Right lobe of liver (tissue), 6 donors: ENCODE measurements at regions of chr1 and their contacts with region 1.

Region 1: DNA sequence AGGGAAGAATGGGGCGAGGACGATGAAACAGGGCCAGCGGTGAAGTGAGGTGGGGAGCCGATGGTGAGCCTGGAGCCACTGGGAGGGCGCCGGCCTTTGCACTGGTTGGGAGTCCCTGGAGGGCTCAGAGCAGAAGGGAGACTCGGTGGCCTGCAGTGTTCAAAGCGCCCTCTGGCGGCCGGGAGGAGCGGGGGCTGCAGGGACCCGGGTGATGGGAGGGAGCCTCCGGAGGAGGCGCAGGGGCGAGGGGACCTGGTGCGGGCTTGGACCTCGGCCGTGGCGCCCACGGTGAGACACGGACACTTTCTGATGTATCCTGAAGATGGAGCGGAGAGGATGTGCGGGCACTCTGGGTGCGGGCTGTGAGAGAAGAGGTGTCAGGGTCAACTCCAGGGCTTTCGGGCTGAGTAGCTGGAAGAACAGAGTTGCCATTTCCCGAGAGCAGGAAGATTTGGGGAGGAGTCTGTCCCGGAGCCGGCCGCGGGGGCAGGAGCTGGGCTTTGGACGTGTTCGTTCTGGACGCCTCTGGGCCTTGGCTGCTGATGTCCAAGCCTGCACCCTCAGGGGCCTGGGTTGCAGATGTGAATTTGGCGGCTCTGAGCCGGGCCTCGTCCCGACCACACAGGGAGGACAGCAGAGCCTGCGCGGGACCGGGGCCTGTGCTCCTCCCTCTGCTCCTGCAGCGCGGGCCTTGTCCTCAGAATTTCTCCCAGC is 29.7 kb downstream of the HEYL start:
- DNase-seq: peak; percentile 50 to 76 (median 57)
- ATAC-seq: peak; percentile 73 to 90 (median 88)
- H3K4me3 ChIP-seq: no peak overlapping the region
- H3K27ac ChIP-seq: no peak overlapping the region
- H3K4me1 ChIP-seq: no peaks in the 10 kb centered on the region
- H3K27me3 ChIP-seq: no peaks in the 10 kb centered on the region
- CTCF ChIP-seq: peak; percentile 54 to 84 (median 65)
- POLR2A ChIP-seq: no peak

Region 2: GRCh38 chr1:39653546-39654031 is 43.8 kb after region 1 on chr1:
- intact Hi-C with region 1: loop called (anchors 10 kb)
- DNase-seq: peak in 2 of 3 donors; percentile 72 to 74
- ATAC-seq: peak; percentile 83 to 92 (median 89)
- H3K4me3 ChIP-seq: no peak overlapping the region
- H3K27ac ChIP-seq: no peak overlapping the region
- H3K4me1 ChIP-seq: no peaks in the 10 kb centered on the region
- H3K27me3 ChIP-seq: no peaks in the 10 kb centered on the region
- CTCF ChIP-seq: peak; percentile 74 to 94 (median 90)
- POLR2A ChIP-seq: no peak

Region 3: GRCh38 chr1:39711104-39711965 is 101.6 kb after region 1 on chr1:
- intact Hi-C with region 1: loop called in 1 of 2 experiments (anchors 10 kb)
- DNase-seq: no peak
- ATAC-seq: no peak
- H3K4me3 ChIP-seq: no peak overlapping the region
- H3K27ac ChIP-seq: no peak overlapping the region
- H3K4me1 ChIP-seq: no peaks in the 10 kb centered on the region
- H3K27me3 ChIP-seq: no peaks in the 10 kb centered on the region
- CTCF ChIP-seq: no peak
- POLR2A ChIP-seq: no peak

Region 4: GRCh38 chr1:39720094-39720999 is 110.6 kb after region 1 on chr1:
- intact Hi-C with region 1: loop called (anchors 10 kb)
- DNase-seq: no peak
- ATAC-seq: peak; percentile 76 to 94 (median 83)
- H3K4me3 ChIP-seq: no peak overlapping the region
- H3K27ac ChIP-seq: no peak overlapping the region
- H3K4me1 ChIP-seq: no peaks in the 10 kb centered on the region
- H3K27me3 ChIP-seq: no peaks in the 10 kb centered on the region
- CTCF ChIP-seq: peak; percentile 72 to 81 (median 76)
- POLR2A ChIP-seq: no peak